Activated T-helper 2 cell treated with anti-CD3 and anti-CD28 coated beads, Interferon-gamma antibody, Interleukin-2, Interleukin-4, amounts not matched to agents 10 μg/mL and 5 μg/mL and 100 μg/mL, durations not matched to agents 14 hours and 24 hours and 36 hours (primary cell): ENCODE measurements at regions of chr6 and their contacts with region 1.

Region 1: GRCh38 chr6:291697-292505 is at the start of gene DUSP22:
- DNase-seq: peak; percentile 78
- H3K4me3 Mint-ChIP-seq: peak within 1 kb of the TSS; percentile 91
- H3K27ac Mint-ChIP-seq: peak within 1 kb of the TSS; percentile 95
- H3K4me1 Mint-ChIP-seq: peaks cover 45% of the 10 kb centered on the region
- H3K27me3 Mint-ChIP-seq: no peaks in the 10 kb centered on the region
- total RNA-seq, gene DUSP22: 27.5 and 28.6 TPM in 2 replicates

Region 2: GRCh38 chr6:227074-227782 is 64.7 kb before region 1 on chr6:
- intact Hi-C with region 1: loop called (anchors 1 kb)
- DNase-seq: no peak
- H3K4me3 Mint-ChIP-seq: no peak overlapping the region
- H3K27ac Mint-ChIP-seq: peak overlapping the region; percentile 28
- H3K4me1 Mint-ChIP-seq: peaks cover 76% of the 10 kb centered on the region
- H3K27me3 Mint-ChIP-seq: no peaks in the 10 kb centered on the region

Region 3: GRCh38 chr6:273551-274058 is 18.3 kb before region 1 on chr6:
- intact Hi-C with region 1: loop called (anchors 2 kb)
- DNase-seq: no peak
- H3K4me3 Mint-ChIP-seq: no peak overlapping the region
- H3K27ac Mint-ChIP-seq: no peak overlapping the region
- H3K4me1 Mint-ChIP-seq: peaks cover 21% of the 10 kb centered on the region
- H3K27me3 Mint-ChIP-seq: peaks cover 7% of the 10 kb centered on the region

Region 4: GRCh38 chr6:391559-392440 is 99.9 kb after region 1 on chr6 and contains the start of gene IRF4:
- intact Hi-C with region 1: loop called (anchors 1 kb)
- DNase-seq: peak; percentile 70
- H3K4me3 Mint-ChIP-seq: peak within 1 kb of the TSS; percentile 95
- H3K27ac Mint-ChIP-seq: peak within 1 kb of the TSS; percentile 96
- H3K4me1 Mint-ChIP-seq: peaks cover 36% of the 10 kb centered on the region
- H3K27me3 Mint-ChIP-seq: no peaks in the 10 kb centered on the region
- total RNA-seq, gene IRF4: 1,053 and 1,062 TPM in 2 replicates

Region 5: GRCh38 chr6:446418-447366 is 154.8 kb after region 1 on chr6:
- intact Hi-C with region 1: loop called (anchors 1 kb)
- DNase-seq: peak; percentile 88
- H3K4me3 Mint-ChIP-seq: peak overlapping the region; percentile 40
- H3K27ac Mint-ChIP-seq: peak overlapping the region; percentile 91
- H3K4me1 Mint-ChIP-seq: peaks cover 54% of the 10 kb centered on the region
- H3K27me3 Mint-ChIP-seq: no peaks in the 10 kb centered on the region